GM10248 (cell line): ENCODE measurements at regions of chr11 and their contacts with region 1.

Region 1: DNA sequence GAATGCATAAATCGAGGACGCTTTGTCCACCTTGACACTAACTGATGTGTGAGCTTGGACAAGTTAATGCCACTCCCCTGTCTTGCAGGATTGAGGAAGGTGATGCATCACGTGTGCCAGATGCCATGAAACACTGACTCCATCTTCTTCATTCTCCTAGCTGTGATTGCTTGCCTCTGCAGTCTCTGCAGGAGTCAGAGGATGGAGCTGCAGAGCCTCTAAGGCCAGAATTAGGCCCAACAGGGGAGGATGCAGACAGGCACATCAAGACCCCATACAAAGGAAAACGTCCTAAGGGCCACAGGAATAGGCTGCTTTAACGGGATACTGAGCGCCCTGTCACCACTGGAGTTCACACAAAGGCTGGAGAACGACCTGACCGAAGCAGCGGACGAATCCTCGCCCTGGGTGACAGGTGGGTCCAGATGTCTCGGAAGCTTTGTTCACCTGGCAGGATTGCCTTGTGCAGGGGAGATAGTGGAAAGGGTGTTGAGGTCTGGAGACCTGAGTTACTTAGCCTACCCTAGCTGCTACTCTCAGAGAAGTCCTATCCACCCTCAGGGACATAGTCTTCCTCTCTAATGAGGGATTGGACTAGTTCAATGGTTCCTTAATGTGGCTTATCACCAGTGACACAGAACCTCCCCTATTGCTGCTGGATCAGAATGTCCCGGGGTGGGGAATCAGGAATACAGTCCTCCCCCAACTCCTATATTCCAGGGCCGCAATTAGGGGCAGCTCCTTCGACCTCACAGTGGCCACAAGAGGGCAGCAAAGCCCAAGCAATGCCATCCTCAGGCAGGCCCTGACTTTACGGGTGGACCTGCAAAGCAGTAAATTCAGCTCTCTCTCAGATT is 32.4 kb downstream of the DBX1 start:
- DNase-seq: peak; percentile 70
- CTCF ChIP-seq: peak; percentile 91

Region 2: GRCh38 chr11:19951558-19952115 is 176.3 kb before region 1 on chr11:
- CTCF ChIA-PET with region 1: interaction called, 13 read pairs
- POLR2A ChIA-PET with region 1: no interaction called
- DNase-seq: peak; percentile 39
- CTCF ChIP-seq: peak; percentile 38

Region 3: DNA sequence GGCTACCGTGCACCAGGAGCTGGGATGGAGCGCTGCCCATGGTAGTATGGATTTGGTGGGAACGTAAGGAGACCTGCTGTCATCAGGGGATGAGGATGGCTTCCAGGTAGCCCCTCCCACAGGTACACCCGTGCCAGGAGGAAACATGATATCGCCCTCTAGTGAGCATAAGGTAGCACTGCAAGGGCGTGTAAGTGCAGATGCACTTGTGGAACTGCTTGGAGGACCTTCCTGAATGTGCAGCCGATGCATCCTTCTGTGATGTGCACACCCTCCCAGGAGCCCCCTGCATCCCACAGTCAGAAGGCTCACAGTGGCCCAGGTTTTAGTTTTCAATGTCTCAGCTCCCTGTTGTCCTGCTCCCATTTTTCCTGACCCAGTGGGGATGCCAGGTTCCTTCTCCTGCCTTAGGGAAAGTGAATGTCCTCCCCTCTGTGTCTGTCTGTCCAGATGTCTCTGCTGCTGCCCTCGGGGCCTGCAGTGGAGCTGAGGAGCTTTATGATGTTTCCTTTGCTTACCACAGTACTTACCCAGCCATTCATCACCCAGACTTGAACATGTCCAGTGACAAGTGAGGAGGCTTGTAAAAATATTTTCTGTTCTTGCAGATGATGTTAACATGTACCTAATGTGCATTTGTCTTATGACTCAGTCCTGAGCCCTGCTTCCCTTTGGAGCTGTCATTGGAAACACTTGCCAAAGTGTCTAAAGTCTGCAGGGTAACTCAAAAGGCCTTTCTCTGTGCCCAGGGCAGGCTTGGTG is 16.8 kb before region 1 on chr11:
- CTCF ChIA-PET with region 1: interaction called, 91 read pairs
- POLR2A ChIA-PET with region 1: no interaction called
- DNase-seq: peak; percentile 76
- CTCF ChIP-seq: peak; percentile 86

Region 4: DNA sequence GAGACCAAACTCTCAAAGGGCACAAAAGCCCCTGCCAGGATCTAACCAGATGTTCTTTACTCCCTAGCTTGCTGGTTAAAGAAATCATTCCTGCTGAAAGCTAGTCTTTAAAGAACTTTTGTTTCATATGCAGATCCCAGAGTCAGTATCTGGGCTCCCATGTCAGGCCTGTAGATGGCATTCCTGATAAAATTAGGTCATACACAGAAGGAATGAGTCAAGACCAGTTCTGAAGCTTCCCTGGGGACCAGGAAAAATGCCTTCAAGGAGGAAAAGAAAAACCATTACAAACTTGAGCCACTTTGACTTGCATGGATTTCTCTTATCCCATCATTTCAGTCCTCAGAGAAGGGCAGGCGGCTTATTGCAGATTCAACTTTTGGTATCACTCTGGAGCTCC is 26.5 kb after region 1 on chr11:
- CTCF ChIA-PET with region 1: interaction called, 15 read pairs
- POLR2A ChIA-PET with region 1: no interaction called
- DNase-seq: no peak
- CTCF ChIP-seq: no peak

Region 5: GRCh38 chr11:20337526-20338154 is 209.7 kb after region 1 on chr11:
- CTCF ChIA-PET with region 1: interaction called, 14 read pairs
- POLR2A ChIA-PET with region 1: no interaction called
- DNase-seq: peak; percentile 24
- CTCF ChIP-seq: peak; percentile 42

Region 6: GRCh38 chr11:20363500-20364411 is 235.9 kb after region 1 on chr11 and contains the start of gene HTATIP2:
- CTCF ChIA-PET with region 1: interaction called, 145 read pairs
- POLR2A ChIA-PET with region 1: no interaction called
- DNase-seq: peak; percentile 84
- CTCF ChIP-seq: no peak

Region 7: GRCh38 chr11:20551096-20551495 is 423.2 kb after region 1 on chr11:
- CTCF ChIA-PET with region 1: no interaction called
- POLR2A ChIA-PET with region 1: no interaction called
- DNase-seq: no peak
- CTCF ChIP-seq: no peak

Region 8: DNA sequence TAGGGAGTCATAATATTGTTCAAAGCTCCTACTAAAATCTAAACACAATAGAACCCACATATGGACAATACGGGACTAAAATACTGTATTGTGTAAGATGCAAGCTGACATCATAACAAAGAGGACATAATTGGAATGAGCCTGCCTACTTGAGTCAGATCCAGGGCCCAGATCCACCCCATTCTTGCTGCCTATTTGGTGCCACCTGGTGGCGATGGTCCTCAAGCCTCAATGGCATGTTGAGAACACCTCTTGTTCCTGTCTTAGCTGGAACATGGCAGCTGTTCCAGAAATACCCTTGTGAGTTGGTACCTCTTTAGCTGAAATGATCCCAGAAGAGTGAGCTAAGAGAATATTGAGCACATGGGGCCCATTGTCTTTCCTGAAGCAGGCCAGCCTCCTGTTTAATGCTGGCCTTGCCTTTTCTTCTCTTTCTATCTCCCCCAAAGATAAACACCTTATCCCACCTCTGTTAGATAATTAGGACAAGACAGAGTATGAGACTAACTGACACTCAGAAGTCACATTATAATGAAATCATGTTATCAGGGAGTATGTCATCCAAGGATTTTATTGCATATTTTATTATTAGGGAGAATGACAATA is 1384.0 kb after region 1 on chr11:
- CTCF ChIA-PET with region 1: interaction called, 10 read pairs
- POLR2A ChIA-PET with region 1: no interaction called
- DNase-seq: peak; percentile 24
- CTCF ChIP-seq: peak; percentile 75